HepG2 (cell line): ENCODE measurements at regions of chr6 and their contacts with region 1.

Region 1: DNA sequence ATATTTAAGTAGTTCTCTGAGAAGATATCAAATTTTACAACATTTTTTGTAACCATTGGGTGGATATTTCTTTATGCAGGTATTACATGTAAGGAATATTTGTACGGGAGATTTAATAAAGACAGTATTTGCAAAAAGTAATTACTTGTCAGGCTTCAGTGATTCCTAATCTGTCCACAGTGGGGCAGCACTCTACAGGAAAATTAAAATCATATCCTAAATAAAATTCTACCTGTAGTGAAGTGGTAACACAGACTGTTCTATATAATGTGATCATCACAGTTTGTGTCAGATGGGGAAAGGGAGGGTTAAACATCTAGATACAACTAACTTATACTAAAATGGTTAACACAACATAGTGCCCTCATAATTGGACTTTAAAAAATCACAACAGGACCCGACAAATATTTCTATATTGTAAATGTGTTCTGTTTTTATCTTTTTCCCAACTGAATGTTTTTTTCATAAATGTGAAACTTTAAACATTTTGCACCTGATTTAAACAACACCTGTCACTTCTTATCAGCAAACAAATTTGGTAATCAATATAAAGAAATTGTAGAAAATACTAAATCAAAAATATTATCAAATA is 145.6 kb upstream of the MANEA start:
- DNase-seq: peak; percentile 9
- ATAC-seq: no peak
- H3K4me3 ChIP-seq: no peak overlapping the region
- H3K27ac ChIP-seq: no peak overlapping the region
- H3K4me1 ChIP-seq: no peaks in the 10 kb centered on the region
- H3K27me3 ChIP-seq: no peaks in the 10 kb centered on the region
- CTCF ChIP-seq: peak; percentile 59
- EP300 ChIP-seq: no peak
- POLR2A ChIP-seq: no peak
- RAD21 ChIP-seq: no peak

Region 2: DNA sequence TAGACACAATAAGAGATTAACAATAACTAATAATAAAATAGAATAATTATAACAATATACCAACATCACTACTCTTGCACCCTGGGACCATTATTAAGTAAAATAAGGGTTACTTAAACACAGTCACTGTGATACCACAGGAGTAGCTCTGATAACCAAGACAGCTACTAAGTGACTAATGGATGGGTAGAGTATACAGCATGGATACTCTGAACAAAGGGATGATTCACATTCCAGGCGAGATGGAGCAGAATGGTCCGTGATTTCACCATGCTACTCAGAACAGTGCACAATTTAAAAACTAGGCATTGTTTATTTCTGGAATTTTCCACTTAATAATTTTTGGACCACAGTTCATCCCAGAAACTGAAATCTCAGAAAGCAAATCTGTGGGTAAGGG is 504.0 kb after region 1 on chr6:
- CTCF ChIA-PET with region 1: no interaction called
- POLR2A ChIA-PET with region 1: no interaction called
- in situ Hi-C with region 1: loop called (anchors 25 kb)
- intact Hi-C with region 1: no loop called
- DNase-seq: no peak
- ATAC-seq: no peak
- H3K4me3 ChIP-seq: no peak overlapping the region
- H3K27ac ChIP-seq: no peak overlapping the region
- H3K4me1 ChIP-seq: no peaks in the 10 kb centered on the region
- H3K27me3 ChIP-seq: no peaks in the 10 kb centered on the region
- CTCF ChIP-seq: no peak
- EP300 ChIP-seq: no peak
- POLR2A ChIP-seq: no peak
- RAD21 ChIP-seq: no peak